ENCODE measurements at regions of chr3 and their contacts with region 1.

Region 1: GRCh38 chr3:119641416-119641815 is 19.0 kb downstream of the POPDC2 start:
- DNase-seq: no peak
- H3K4me3 ChIP-seq: no peak overlapping the region
- H3K4me3 Mint-ChIP-seq: no peak overlapping the region
- H3K27ac ChIP-seq: no peak overlapping the region
- H3K27ac Mint-ChIP-seq: no peak overlapping the region
- H3K4me1 ChIP-seq: no peaks in the 10 kb centered on the region
- H3K4me1 Mint-ChIP-seq: peaks cover 0 to 9% (median 4%) of the 10 kb centered on the region in 3 donors
- H3K27me3 ChIP-seq: no peaks in the 10 kb centered on the region
- H3K27me3 Mint-ChIP-seq: no peaks in the 10 kb centered on the region

Region 2: GRCh38 chr3:119453818-119454217 is 187.6 kb before region 1 on chr3:
- CTCF ChIA-PET with region 1: no interaction called
- POLR2A ChIA-PET with region 1: no interaction called
- DNase-seq: no peak
- H3K4me3 ChIP-seq: no peak overlapping the region
- H3K4me3 Mint-ChIP-seq: no peak overlapping the region
- H3K27ac ChIP-seq: no peak overlapping the region
- H3K27ac Mint-ChIP-seq: peak overlapping the region in 3 of 8 donors; percentile 22 to 62 (median 37)
- H3K4me1 ChIP-seq: no peaks in the 10 kb centered on the region
- H3K4me1 Mint-ChIP-seq: peaks cover 21 to 36% (median 33%) of the 10 kb centered on the region in 3 donors
- H3K27me3 ChIP-seq: no peaks in the 10 kb centered on the region
- H3K27me3 Mint-ChIP-seq: no peaks in the 10 kb centered on the region

Region 3: GRCh38 chr3:119681279-119681678 is 39.9 kb after region 1 on chr3:
- CTCF ChIA-PET with region 1: no interaction called
- POLR2A ChIA-PET with region 1: no interaction called
- DNase-seq: no peak
- H3K4me3 ChIP-seq: no peak overlapping the region
- H3K4me3 Mint-ChIP-seq: no peak overlapping the region
- H3K27ac ChIP-seq: no peak overlapping the region
- H3K27ac Mint-ChIP-seq: no peak overlapping the region
- H3K4me1 ChIP-seq: peaks cover 9% of the 10 kb centered on the region
- H3K4me1 Mint-ChIP-seq: peaks cover 12 to 13% (median 12%) of the 10 kb centered on the region in 3 donors
- H3K27me3 ChIP-seq: no peaks in the 10 kb centered on the region
- H3K27me3 Mint-ChIP-seq: no peaks in the 10 kb centered on the region

Region 4: DNA sequence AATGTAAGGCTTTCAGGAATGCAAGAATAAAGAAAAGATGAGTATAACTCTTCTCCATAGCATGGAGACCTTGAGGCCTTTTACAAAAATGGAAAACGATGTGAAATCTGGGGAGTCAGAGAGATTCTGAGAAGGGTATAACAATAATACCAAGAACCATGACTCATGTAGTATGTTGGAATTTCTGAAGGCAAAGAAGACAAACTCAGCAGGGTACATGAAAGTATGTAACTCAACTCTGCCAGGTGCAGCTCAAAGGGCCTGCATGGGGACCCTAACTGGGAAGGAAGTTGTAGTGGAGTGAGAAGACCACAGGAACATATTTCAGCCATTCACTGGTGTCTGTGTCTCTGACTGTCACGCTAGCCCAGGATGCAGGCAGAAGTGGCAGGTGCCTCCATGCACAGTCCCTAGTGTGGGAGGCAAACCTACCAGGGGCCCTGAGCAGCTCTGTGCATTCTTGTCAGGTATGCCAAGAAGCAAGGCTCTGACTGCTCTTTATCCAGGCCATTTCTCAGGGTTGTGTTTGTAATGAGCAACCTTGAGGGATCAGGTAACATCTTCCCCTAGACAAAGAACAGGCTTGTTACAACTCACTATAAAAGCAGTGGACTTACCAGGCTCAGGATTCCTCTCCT is 586.4 kb after region 1 on chr3:
- CTCF ChIA-PET with region 1: no interaction called
- POLR2A ChIA-PET with region 1: interaction called, 11 read pairs
- DNase-seq: no peak
- H3K4me3 ChIP-seq: no peak overlapping the region
- H3K4me3 Mint-ChIP-seq: no peak overlapping the region
- H3K27ac ChIP-seq: no peak overlapping the region
- H3K27ac Mint-ChIP-seq: no peak overlapping the region
- H3K4me1 ChIP-seq: no peaks in the 10 kb centered on the region
- H3K4me1 Mint-ChIP-seq: no peaks in the 10 kb centered on the region
- H3K27me3 ChIP-seq: no peaks in the 10 kb centered on the region
- H3K27me3 Mint-ChIP-seq: peaks cover 5 to 16% of the 10 kb centered on the region in 2 donors

Measured in CD8-positive, alpha-beta memory T cell (primary cell).